ENCODE measurements at regions of chr4 and their contacts with region 1.

Region 1: GRCh38 chr4:68463804-68464203 is 16.5 kb downstream of the TMPRSS11E start:
- DNase-seq: no peak
- ATAC-seq: no peak
- H3K4me3 ChIP-seq: no peak overlapping the region
- H3K27ac ChIP-seq: no peak overlapping the region
- H3K4me1 ChIP-seq: no peaks in the 10 kb centered on the region
- H3K27me3 ChIP-seq: no peaks in the 10 kb centered on the region

Region 2: DNA sequence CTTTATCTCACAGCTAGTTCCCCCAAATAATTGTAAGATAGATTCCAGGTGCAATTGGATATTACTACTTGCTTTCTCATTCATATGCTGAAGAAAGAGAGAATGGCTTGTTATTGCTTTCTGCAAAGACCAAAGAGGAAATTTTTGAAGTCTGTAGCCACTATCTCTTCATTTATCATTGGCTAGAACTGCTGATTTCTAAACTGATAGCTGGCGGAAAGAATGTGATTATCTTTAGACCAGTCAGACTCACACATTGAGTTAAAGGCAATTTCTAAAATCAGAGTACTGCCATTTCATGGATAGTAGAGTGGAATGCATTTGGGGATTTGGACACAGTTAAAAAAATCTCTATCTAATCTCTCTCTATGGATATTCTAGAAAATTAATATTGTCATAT is 29.0 kb before region 1 on chr4:
- intact Hi-C with region 1: loop called in 1 of 2 experiments (anchors 2 kb)
- DNase-seq: no peak
- ATAC-seq: no peak
- H3K4me3 ChIP-seq: no peak overlapping the region
- H3K27ac ChIP-seq: no peak overlapping the region
- H3K4me1 ChIP-seq: no peaks in the 10 kb centered on the region
- H3K27me3 ChIP-seq: no peaks in the 10 kb centered on the region

Region 3: DNA sequence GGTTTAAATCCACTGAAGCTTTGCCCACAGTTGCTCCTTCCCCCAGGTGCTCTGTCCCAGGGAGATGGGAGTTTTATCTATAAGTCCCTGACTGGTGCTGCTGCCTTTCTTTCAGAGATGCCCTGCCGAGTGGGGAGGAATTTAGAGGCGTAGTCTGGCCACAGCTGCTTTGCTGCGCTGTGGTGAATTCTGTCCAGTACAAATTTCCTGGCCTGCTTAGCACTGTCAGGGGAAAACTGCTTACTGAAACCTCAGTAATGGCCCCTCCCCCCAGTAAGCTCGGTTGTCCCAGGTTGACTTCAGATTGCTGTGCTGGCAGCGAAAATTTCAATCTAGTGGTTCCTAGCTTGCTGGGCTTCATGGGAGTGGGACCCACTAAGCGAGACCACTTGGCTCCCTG is 72.2 kb after region 1 on chr4:
- intact Hi-C with region 1: no loop called
- DNase-seq: no peak
- ATAC-seq: no peak
- H3K4me3 ChIP-seq: no peak overlapping the region
- H3K27ac ChIP-seq: no peak overlapping the region
- H3K4me1 ChIP-seq: no peaks in the 10 kb centered on the region
- H3K27me3 ChIP-seq: no peaks in the 10 kb centered on the region